ENCODE measurements at regions of chr17 and their contacts with region 1.

Region 1: GRCh38 chr17:69327060-69327831 is at the start of gene ABCA5:
- DNase-seq: peak; percentile 89 to 93
- ATAC-seq: peak; percentile 92 to 98 (median 96)
- H3K4me3 ChIP-seq: peak within 1 kb of the TSS; percentile 90
- H3K27ac ChIP-seq: peak within 1 kb of the TSS; percentile 97
- H3K4me1 ChIP-seq: peaks cover 27% of the 10 kb centered on the region
- H3K27me3 ChIP-seq: no peaks in the 10 kb centered on the region
- CTCF ChIP-seq: no peak
- total RNA-seq, gene ABCA5: 54.9 to 81.5 (median 75.0) TPM

Region 2: DNA sequence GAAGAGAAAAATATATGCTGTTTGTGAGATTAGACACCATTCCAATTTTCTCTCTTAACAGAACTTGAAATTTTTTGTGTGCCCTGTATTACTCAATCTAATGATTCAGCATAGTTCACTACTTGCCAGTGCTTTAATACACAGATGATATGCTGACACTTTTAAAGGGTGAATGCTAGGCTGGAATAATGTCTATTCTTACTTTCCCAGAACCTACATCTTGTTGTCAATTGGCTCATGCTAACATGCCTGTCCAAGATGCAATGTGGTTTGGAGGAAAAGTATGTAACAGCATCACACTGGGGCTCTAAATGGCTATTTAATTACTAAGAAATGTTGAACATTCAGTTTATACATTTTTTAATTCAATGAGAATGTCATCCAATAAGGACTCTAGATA is 79.7 kb after region 1 on chr17:
- intact Hi-C with region 1: no loop called
- DNase-seq: no peak
- ATAC-seq: no peak
- H3K4me3 ChIP-seq: no peak overlapping the region
- H3K27ac ChIP-seq: no peak overlapping the region
- H3K4me1 ChIP-seq: no peaks in the 10 kb centered on the region
- H3K27me3 ChIP-seq: no peaks in the 10 kb centered on the region
- CTCF ChIP-seq: no peak

Region 3: GRCh38 chr17:69716556-69716955 is 389.3 kb after region 1 on chr17:
- intact Hi-C with region 1: loop called in 1 of 2 experiments (anchors 10 kb)
- DNase-seq: no peak
- ATAC-seq: no peak
- H3K4me3 ChIP-seq: no peak overlapping the region
- H3K27ac ChIP-seq: no peak overlapping the region
- H3K4me1 ChIP-seq: peaks cover 9% of the 10 kb centered on the region
- H3K27me3 ChIP-seq: no peaks in the 10 kb centered on the region
- CTCF ChIP-seq: no peak

Measured in psoas muscle (tissue), 8 donors.